Calu3 (cell line): ENCODE measurements at regions of chr10 and their contacts with region 1.

Region 1: DNA sequence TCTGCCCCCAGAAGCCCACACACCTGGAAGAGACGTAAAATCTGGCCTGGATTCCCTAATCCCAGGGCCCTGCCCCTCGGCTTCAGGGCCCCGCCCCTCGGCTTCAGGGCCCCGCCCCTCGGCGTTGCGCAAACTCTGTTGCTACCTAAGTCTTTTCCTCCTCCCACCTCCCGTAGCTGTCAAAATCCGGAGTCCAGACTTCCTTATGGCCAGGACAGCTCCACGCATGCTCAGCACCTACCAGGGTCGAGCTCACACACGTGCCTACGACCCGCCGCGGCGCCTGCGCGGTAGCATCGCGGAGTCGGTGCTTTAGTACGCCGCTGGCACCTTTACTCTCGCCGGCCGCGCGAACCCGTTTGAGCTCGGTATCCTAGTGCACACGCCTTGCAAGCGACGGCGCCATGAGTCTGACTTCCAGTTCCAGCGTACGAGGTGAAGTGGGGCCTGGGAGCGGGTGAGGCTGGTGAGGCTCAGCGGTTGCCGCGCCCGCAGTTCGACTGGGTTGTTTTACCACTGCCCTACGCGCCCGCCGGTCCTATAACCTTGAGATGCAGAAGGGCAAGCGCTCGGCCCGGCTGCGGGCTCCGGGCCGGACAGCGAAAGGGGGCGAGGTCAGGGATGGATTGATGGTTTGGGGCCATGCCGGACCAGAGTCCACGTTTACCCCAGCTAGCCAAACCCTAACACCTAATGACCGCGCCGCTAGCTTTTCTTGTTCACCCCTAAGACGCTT is at the start of gene CISD1:
- DNase-seq: peak; percentile 99
- H3K4me3 Mint-ChIP-seq: peak within 1 kb of the TSS; percentile 100
- H3K27ac Mint-ChIP-seq: peak within 1 kb of the TSS; percentile 86
- H3K4me1 Mint-ChIP-seq: peaks cover 18% of the 10 kb centered on the region
- H3K27me3 Mint-ChIP-seq: no peaks in the 10 kb centered on the region
- CTCF ChIP-seq: no peak
- total RNA-seq, gene CISD1: 58.3 and 69.0 TPM in 2 replicates

Region 2: GRCh38 chr10:58291538-58292174 is 22.6 kb after region 1 on chr10:
- CTCF ChIA-PET with region 1: interaction called, 12 read pairs
- intact Hi-C with region 1: no loop called
- DNase-seq: peak; percentile 61
- H3K4me3 Mint-ChIP-seq: no peak overlapping the region
- H3K27ac Mint-ChIP-seq: no peak overlapping the region
- H3K4me1 Mint-ChIP-seq: peaks cover 9% of the 10 kb centered on the region
- H3K27me3 Mint-ChIP-seq: no peaks in the 10 kb centered on the region
- CTCF ChIP-seq: peak; percentile 57

Region 3: GRCh38 chr10:58574058-58574457 is 305.0 kb after region 1 on chr10:
- CTCF ChIA-PET with region 1: no interaction called
- intact Hi-C with region 1: no loop called
- DNase-seq: no peak
- H3K4me3 Mint-ChIP-seq: peak overlapping the region; percentile 12
- H3K27ac Mint-ChIP-seq: no peak overlapping the region
- H3K4me1 Mint-ChIP-seq: peaks cover 61% of the 10 kb centered on the region
- H3K27me3 Mint-ChIP-seq: no peaks in the 10 kb centered on the region
- CTCF ChIP-seq: no peak